ENCODE measurements at regions of chr1 and their contacts with region 1.

Region 1: DNA sequence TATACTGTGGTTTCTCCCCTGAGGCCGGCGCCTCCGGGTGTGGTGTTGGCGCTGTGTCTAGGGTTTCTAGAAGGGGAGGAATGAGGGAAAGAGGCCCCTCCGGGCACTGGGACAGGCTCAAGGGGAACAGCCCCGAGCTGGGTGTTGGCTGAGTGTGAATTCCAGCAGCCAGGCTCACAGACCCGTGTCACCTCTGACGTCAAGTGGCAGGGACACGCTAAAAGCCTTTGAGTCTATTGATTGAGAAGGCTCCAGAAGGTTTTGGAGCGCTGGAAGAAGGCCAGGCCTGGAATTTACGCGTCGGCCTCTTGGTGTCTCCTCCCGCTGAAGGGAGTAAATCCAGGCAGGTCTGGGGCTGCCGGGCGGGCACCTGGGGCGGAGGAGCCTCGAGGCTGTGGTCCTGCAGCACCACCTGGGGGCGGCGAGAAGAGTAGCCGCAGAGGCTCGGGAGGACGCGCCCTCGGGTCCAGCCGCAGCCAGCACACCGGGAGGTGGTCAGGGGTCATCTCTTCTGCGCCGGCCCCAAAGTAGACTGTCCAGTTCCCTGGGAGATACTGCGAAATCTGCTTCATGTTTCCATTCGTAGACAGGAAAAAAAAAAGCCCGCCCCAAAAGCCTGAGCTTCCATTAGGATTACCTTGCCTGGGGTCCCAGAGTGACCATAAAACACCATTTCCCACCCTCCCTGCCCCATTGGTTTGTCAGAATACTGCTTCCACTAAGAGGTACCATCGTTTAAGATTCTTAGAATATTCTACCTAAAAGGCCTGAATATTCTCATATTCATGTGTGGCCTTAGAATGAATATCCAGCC is 61.7 kb downstream of the TLR5 start:
- DNase-seq: peak; percentile 78 to 97
- H3K4me3 ChIP-seq: no peak overlapping the region
- CTCF ChIP-seq: peak in 1 of 3 donors; percentile 98
- POLR2A ChIP-seq: no peak

Region 2: DNA sequence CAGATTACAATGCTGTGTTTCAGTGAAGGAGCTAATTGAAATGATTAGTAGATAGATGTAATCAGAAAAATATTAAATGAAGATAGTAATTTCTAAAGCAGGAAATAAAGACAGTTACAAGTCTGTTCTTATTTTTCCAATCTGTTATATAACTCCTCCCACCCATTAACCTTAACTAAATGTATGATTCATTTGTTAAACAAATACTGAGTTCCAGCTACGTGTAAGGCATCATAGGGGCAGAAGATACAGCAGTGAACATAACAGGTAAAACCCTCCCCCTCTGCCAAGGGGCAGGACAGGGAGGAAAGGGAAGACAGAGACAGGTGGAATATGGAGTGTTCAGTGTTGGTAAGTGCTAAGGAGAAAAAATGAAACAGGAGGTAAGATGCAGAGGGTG is 344.4 kb before region 1 on chr1 and contains the start of gene FAM177B:
- intact Hi-C with region 1: loop called (anchors 2 kb)
- DNase-seq: no peak
- H3K4me3 ChIP-seq: no peak within 1 kb of the TSS
- CTCF ChIP-seq: no peak
- POLR2A ChIP-seq: no peak
- total RNA-seq, gene FAM177B: not detected

Region 3: GRCh38 chr1:222792744-222793143 is 288.6 kb before region 1 on chr1:
- intact Hi-C with region 1: loop called (anchors 10 kb)
- DNase-seq: no peak
- H3K4me3 ChIP-seq: no peak overlapping the region
- CTCF ChIP-seq: no peak
- POLR2A ChIP-seq: no peak

Region 4: DNA sequence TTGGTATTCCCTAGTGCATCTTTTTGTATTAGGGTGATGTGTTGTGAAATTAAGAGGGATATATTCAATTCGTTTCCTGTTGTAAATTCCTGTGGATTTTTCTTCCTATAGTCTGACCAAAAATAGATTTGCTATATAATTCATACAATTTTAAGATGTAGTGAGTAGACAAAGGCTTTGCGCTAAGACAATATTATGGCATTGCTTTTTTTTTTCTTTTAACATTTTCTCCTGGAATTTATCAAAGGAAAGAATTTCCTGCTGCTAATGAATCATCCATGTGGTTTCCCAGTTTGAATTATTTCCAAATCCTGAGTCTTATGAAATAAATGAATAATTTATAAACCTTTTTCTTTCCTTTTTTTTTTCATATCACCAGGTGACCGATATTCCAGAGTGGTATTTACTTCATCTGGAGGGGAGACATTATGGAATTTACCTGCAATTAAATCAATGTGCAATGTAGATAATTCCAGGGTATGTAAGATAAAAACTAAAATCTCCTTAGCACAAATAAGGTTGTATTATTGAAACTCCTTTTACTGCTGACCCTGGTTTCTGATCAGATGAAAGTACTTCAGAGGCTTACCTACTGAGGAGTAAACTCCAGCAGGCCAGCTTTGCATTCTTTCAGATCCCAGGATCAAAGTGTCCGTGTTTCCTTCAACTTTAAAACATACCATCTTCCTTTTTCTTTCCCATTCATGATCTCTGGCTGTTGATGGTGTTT is 86.7 kb before region 1 on chr1:
- intact Hi-C with region 1: no loop called
- DNase-seq: no peak
- H3K4me3 ChIP-seq: no peak overlapping the region
- CTCF ChIP-seq: no peak
- POLR2A ChIP-seq: no peak

Region 5: GRCh38 chr1:223102797-223103533 is 21.6 kb after region 1 on chr1:
- intact Hi-C with region 1: no loop called
- DNase-seq: peak in 1 of 2 donors; percentile 73
- H3K4me3 ChIP-seq: no peak overlapping the region
- CTCF ChIP-seq: no peak
- POLR2A ChIP-seq: no peak